AG04450 (cell line): ENCODE measurements at regions of chr18 and their contacts with region 1.

Region 1: DNA sequence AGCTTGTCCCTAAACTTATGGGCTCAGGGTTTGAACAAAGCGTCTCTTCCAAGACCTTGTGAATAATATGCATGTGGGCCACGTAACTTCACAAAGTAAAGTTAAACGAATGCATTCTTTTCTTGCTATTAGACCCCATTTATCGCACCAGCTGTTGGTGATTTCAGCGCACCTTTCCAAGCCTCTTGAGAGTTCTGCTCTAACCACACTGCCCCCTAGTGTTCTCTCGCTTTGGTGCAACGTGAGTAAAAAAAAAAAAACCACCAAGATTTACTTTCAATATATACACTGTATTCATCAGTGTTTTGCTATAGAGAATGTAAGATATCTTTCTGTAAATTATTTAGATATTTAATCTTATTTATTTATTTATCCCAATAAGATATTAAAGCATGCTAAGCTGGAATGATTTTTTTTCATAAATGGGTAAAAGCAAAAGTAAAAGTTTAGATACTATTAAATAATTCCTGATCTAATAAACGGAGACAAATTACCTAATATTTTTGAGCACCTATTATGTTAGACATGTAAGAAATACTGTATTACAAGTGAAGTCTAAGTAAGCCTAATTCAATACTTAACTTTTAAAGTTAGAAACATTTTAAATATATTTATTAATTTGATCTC is 459.5 kb downstream of the DLGAP1 start:
- DNase-seq: peak; percentile 54
- H3K4me3 ChIP-seq: no peak overlapping the region
- H3K27ac ChIP-seq: no peak overlapping the region
- H3K27me3 ChIP-seq: no peaks in the 10 kb centered on the region
- CTCF ChIP-seq: peak; percentile 93

Region 2: DNA sequence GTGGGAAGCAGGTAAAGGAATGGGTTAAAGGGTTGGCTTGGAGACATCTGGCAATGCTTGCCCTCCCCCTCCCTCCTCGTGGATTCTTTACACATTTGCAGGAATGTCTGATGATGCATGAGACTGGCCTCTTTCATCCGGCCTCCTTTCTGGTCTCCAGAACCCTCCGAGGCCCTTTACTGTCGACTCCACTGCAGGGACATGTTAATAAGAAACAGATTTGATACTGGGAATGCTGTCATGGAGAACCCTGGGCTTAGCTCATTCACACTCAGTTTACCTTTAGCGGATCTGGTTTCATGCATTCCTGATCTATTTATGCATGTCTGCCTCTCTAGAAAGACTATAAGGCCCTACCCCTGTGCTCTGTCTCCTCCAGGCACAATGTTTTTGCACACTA is 306.9 kb before region 1 on chr18:
- CTCF ChIA-PET with region 1: interaction called, 11 read pairs
- POLR2A ChIA-PET with region 1: no interaction called
- DNase-seq: peak; percentile 96
- H3K4me3 ChIP-seq: no peak overlapping the region
- H3K27ac ChIP-seq: peak overlapping the region; percentile 47
- H3K27me3 ChIP-seq: no peaks in the 10 kb centered on the region
- CTCF ChIP-seq: no peak

Region 3: GRCh38 chr18:3715231-3716080 is 280.1 kb before region 1 on chr18:
- CTCF ChIA-PET with region 1: interaction called, 28 read pairs
- POLR2A ChIA-PET with region 1: no interaction called
- DNase-seq: no peak
- H3K4me3 ChIP-seq: no peak overlapping the region
- H3K27ac ChIP-seq: no peak overlapping the region
- H3K27me3 ChIP-seq: peaks cover 3% of the 10 kb centered on the region
- CTCF ChIP-seq: no peak

Region 4: GRCh38 chr18:3771121-3771971 is 224.2 kb before region 1 on chr18:
- CTCF ChIA-PET with region 1: interaction called, 114 read pairs
- POLR2A ChIA-PET with region 1: no interaction called
- DNase-seq: peak; percentile 88
- H3K4me3 ChIP-seq: peak overlapping the region; percentile 52
- H3K27ac ChIP-seq: peak overlapping the region; percentile 77
- H3K27me3 ChIP-seq: no peaks in the 10 kb centered on the region
- CTCF ChIP-seq: peak; percentile 85

Region 5: GRCh38 chr18:3869848-3870247 is 125.7 kb before region 1 on chr18:
- CTCF ChIA-PET with region 1: interaction called, 20 read pairs
- POLR2A ChIA-PET with region 1: no interaction called
- DNase-seq: peak; percentile 27
- H3K4me3 ChIP-seq: no peak overlapping the region
- H3K27ac ChIP-seq: no peak overlapping the region
- H3K27me3 ChIP-seq: no peaks in the 10 kb centered on the region
- CTCF ChIP-seq: peak; percentile 61

Region 6: DNA sequence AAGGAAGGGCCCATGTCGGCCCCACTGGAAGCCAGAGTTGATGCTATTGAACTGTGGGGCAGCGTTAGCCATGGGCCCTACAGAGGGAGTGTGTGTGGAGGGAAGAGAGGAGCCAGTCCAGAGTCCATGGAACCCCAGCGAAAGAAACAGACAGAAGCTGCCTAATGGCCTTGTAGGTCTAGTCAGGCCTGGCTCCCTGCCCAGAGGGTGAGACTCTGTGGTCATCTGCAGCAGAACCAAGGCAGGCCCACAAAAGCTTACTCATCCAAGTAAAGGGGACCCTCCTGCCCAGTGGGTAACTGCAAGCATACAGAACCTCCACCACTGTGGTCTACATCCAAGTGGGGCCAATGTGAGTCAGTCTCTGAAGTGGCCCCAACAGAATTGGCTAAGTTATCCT is 105.8 kb before region 1 on chr18:
- CTCF ChIA-PET with region 1: interaction called, 12 read pairs
- POLR2A ChIA-PET with region 1: no interaction called
- DNase-seq: peak; percentile 8
- H3K4me3 ChIP-seq: no peak overlapping the region
- H3K27ac ChIP-seq: no peak overlapping the region
- H3K27me3 ChIP-seq: no peaks in the 10 kb centered on the region
- CTCF ChIP-seq: no peak

Region 7: GRCh38 chr18:3966985-3967856 is 28.4 kb before region 1 on chr18:
- CTCF ChIA-PET with region 1: interaction called, 19 read pairs
- POLR2A ChIA-PET with region 1: no interaction called
- DNase-seq: no peak
- H3K4me3 ChIP-seq: no peak overlapping the region
- H3K27ac ChIP-seq: no peak overlapping the region
- H3K27me3 ChIP-seq: no peaks in the 10 kb centered on the region
- CTCF ChIP-seq: no peak